ENCODE measurements at regions of chr5 and their contacts with region 1.

Region 1: GRCh38 chr5:119452373-119453039 is at the start of gene HSD17B4:
- DNase-seq: peak; percentile 90 to 92
- ATAC-seq: peak; percentile 96 to 98 (median 97)
- H3K4me3 ChIP-seq: peak within 1 kb of the TSS; percentile 65 to 96 (median 84)
- H3K27ac ChIP-seq: peak within 1 kb of the TSS; percentile 83 to 94 (median 90)
- H3K4me1 ChIP-seq: peaks cover 2 to 28% (median 21%) of the 10 kb centered on the region in 9 donors
- H3K27me3 ChIP-seq: no peaks in the 10 kb centered on the region
- CTCF ChIP-seq: no peak
- total RNA-seq, gene HSD17B4: 193 to 325 (median 216) TPM

Region 2: DNA sequence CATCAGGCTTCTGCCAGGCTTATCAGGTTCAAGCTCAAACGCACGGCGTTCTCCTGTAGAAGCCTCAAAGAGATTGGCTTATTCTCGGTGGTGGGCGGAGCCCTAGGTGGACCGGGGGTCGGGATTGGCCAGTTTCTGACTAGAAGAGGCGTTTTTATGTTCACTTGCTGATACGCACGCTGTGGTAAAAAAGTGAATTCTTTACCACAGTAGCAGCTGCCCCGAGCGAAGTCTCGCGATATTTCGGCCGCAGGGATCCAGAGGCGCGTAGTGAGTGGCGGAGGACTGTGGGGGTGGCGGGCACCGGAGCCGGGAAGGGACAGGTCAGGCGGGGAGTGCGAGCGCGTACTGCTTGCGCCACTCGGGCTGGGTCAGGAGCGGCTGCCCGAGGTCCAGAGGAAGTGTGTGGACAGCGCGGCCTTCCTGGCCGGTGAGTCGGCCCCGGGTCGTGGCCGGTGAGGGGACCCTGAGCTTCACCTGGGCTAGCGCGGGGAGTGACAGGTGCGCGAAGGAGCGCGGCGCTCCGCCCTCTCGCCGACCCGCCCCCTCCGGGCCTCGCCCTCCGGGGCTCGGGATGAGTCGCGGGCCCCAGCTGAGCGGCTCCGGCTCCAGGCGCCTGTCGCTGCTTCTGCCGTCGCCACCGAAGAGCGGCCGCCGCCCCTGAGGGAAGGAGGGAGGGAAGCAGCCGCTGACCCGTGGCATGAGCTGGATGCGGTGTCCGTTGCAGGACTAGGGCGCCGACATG is 381.5 kb before region 1 on chr5 and contains the start of gene DMXL1:
- intact Hi-C with region 1: loop called in 1 of 10 experiments (anchors 2 kb)
- DNase-seq: peak; percentile 99 to 100
- ATAC-seq: peak; percentile 97 to 99 (median 98)
- H3K4me3 ChIP-seq: peak within 1 kb of the TSS; percentile 50 to 99 (median 90)
- H3K27ac ChIP-seq: peak within 1 kb of the TSS; percentile 92 to 97 (median 94)
- H3K4me1 ChIP-seq: peaks cover 3 to 43% (median 31%) of the 10 kb centered on the region in 9 donors
- H3K27me3 ChIP-seq: no peaks in the 10 kb centered on the region
- CTCF ChIP-seq: no peak
- total RNA-seq, gene DMXL1: 19.7 to 36.5 (median 26.7) TPM